CD4-positive, alpha-beta memory T cell (primary cell): ENCODE measurements at regions of chr6 and their contacts with region 1.

Region 1: DNA sequence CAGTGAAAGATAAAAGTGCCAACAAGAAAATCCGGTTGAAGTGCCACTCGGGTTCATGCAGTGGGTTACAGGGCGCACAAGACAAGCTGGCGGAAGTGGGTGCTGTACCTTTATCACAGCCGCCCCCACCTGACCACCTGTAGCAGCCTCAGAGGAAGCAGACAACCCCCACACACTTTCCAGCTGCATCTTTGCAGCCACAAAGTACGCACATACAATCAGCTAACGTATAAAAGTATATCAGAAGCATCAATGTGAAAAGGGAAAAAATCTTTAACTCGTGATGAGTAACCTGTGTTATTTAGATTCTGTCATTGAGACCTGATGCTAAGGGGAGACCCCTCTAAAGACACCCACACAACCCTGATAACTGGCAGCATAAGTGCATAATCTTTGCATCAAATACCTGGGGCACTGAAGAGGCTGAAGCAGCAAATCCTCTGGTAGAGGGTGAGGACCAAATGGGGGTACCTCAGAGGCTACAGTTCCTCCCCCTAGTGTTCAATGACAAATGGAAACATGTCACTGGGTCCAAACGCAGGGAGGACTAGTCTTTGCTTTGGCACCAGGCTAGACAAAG is 22.1 kb downstream of the BACH2 start:
- DNase-seq: peak; percentile 93 to 99 (median 97)
- H3K4me3 ChIP-seq: peak overlapping the region in 1 of 2 donors; percentile 21
- H3K4me3 Mint-ChIP-seq: peak overlapping the region; percentile 60 to 89 (median 79)
- H3K27ac ChIP-seq: peak overlapping the region; percentile 82
- H3K27ac Mint-ChIP-seq: peak overlapping the region; percentile 94 to 100 (median 99)
- H3K4me1 ChIP-seq: peaks cover 50% of the 10 kb centered on the region
- H3K4me1 Mint-ChIP-seq: peaks cover 51 to 80% (median 67%) of the 10 kb centered on the region in 4 donors
- H3K27me3 ChIP-seq: no peaks in the 10 kb centered on the region
- H3K27me3 Mint-ChIP-seq: no peaks in the 10 kb centered on the region

Region 2: GRCh38 chr6:90216072-90216977 is 58.2 kb before region 1 on chr6:
- CTCF ChIA-PET with region 1: interaction called, 3 read pairs
- POLR2A ChIA-PET with region 1: interaction called, 5 read pairs
- intact Hi-C with region 1: loop called (anchors 2 kb)
- DNase-seq: peak in 4 of 5 donors; percentile 11 to 73 (median 31)
- H3K4me3 ChIP-seq: no peak overlapping the region
- H3K4me3 Mint-ChIP-seq: peak overlapping the region in 5 of 8 donors; percentile 6 to 61 (median 35)
- H3K27ac ChIP-seq: peak overlapping the region; percentile 43
- H3K27ac Mint-ChIP-seq: peak overlapping the region in 3 of 7 donors; percentile 84 to 89 (median 86)
- H3K4me1 ChIP-seq: peaks cover 59% of the 10 kb centered on the region
- H3K4me1 Mint-ChIP-seq: peaks cover 27 to 30% (median 28%) of the 10 kb centered on the region in 4 donors
- H3K27me3 ChIP-seq: no peaks in the 10 kb centered on the region
- H3K27me3 Mint-ChIP-seq: no peaks in the 10 kb centered on the region

Region 3: GRCh38 chr6:90233994-90234393 is 40.5 kb before region 1 on chr6:
- CTCF ChIA-PET with region 1: interaction called, 3 read pairs
- POLR2A ChIA-PET with region 1: interaction called, 9 read pairs
- intact Hi-C with region 1: loop called (anchors 2 kb)
- DNase-seq: peak; percentile 79 to 89 (median 80)
- H3K4me3 ChIP-seq: no peak overlapping the region
- H3K4me3 Mint-ChIP-seq: peak overlapping the region; percentile 3 to 90 (median 74)
- H3K27ac ChIP-seq: peak overlapping the region; percentile 32
- H3K27ac Mint-ChIP-seq: peak overlapping the region; percentile 65 to 97 (median 92)
- H3K4me1 ChIP-seq: peaks cover 90% of the 10 kb centered on the region
- H3K4me1 Mint-ChIP-seq: peaks cover 63 to 97% (median 81%) of the 10 kb centered on the region in 4 donors
- H3K27me3 ChIP-seq: no peaks in the 10 kb centered on the region
- H3K27me3 Mint-ChIP-seq: no peaks in the 10 kb centered on the region

Region 4: GRCh38 chr6:90256698-90257485 is 17.6 kb before region 1 on chr6:
- CTCF ChIA-PET with region 1: interaction called, 3 read pairs
- POLR2A ChIA-PET with region 1: interaction called, 4 read pairs
- intact Hi-C with region 1: loop called (anchors 2 kb)
- DNase-seq: peak; percentile 50 to 76 (median 71)
- H3K4me3 ChIP-seq: no peak overlapping the region
- H3K4me3 Mint-ChIP-seq: peak overlapping the region in 6 of 8 donors; percentile 2 to 52 (median 13)
- H3K27ac ChIP-seq: peak overlapping the region; percentile 13
- H3K27ac Mint-ChIP-seq: peak overlapping the region; percentile 61 to 90 (median 82)
- H3K4me1 ChIP-seq: peaks cover 28% of the 10 kb centered on the region
- H3K4me1 Mint-ChIP-seq: peaks cover 29 to 77% (median 55%) of the 10 kb centered on the region in 4 donors
- H3K27me3 ChIP-seq: no peaks in the 10 kb centered on the region
- H3K27me3 Mint-ChIP-seq: no peaks in the 10 kb centered on the region

Region 5: GRCh38 chr6:90263633-90264032 is 10.9 kb before region 1 on chr6:
- CTCF ChIA-PET with region 1: interaction called, 7 read pairs
- POLR2A ChIA-PET with region 1: interaction called, 11 read pairs
- intact Hi-C with region 1: no loop called
- DNase-seq: no peak
- H3K4me3 ChIP-seq: no peak overlapping the region
- H3K4me3 Mint-ChIP-seq: peak overlapping the region in 1 of 8 donors; percentile 25
- H3K27ac ChIP-seq: no peak overlapping the region
- H3K27ac Mint-ChIP-seq: no peak overlapping the region
- H3K4me1 ChIP-seq: peaks cover 55% of the 10 kb centered on the region
- H3K4me1 Mint-ChIP-seq: peaks cover 34 to 88% (median 60%) of the 10 kb centered on the region in 4 donors
- H3K27me3 ChIP-seq: no peaks in the 10 kb centered on the region
- H3K27me3 Mint-ChIP-seq: no peaks in the 10 kb centered on the region

Region 6: DNA sequence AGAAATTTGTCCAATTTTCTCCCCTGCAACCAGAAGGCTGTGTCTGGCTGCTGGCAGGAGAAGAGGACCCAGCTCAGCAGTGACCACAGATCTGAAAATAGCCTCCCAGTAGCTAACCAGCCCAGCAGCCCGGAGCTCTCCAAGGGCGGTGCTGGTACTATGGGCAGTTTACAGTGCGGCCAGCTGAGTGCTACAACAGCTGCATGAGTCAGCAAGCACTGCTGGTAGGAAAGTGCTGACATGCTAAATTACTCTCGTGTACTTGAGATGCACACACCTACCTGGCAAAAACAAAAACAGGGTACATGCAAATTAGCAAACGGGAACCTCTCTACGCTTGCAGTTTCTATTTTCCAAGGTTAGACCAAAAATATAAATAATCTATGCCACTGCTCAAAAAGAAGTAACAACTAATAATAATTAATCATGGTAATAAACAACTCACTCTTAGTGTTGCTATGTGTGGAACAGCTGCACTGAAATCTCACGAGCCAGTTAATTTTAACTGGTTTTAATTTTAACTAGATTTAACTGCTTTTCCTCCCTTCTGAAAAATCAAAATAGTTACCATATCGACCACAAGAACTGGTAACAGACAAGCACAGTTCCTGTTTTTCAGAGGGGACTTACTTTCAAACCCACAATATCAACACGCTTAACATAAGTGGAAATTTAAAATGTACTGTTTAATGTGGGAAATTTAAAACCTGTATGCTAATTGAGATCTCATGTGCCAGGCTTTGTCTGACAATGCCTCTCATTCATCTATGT is 11.3 kb after region 1 on chr6:
- CTCF ChIA-PET with region 1: interaction called, 16 read pairs
- POLR2A ChIA-PET with region 1: interaction called, 85 read pairs
- intact Hi-C with region 1: loop called (anchors 1 kb)
- DNase-seq: peak; percentile 68 to 83 (median 76)
- H3K4me3 ChIP-seq: peak overlapping the region; percentile 1 to 58
- H3K4me3 Mint-ChIP-seq: peak overlapping the region; percentile 80 to 95 (median 86)
- H3K27ac ChIP-seq: peak overlapping the region; percentile 46
- H3K27ac Mint-ChIP-seq: peak overlapping the region; percentile 77 to 98 (median 89)
- H3K4me1 ChIP-seq: peaks cover 32% of the 10 kb centered on the region
- H3K4me1 Mint-ChIP-seq: peaks cover 47 to 89% (median 68%) of the 10 kb centered on the region in 4 donors
- H3K27me3 ChIP-seq: no peaks in the 10 kb centered on the region
- H3K27me3 Mint-ChIP-seq: peaks cover 0 to 2% of the 10 kb centered on the region in 2 donors

Region 7: DNA sequence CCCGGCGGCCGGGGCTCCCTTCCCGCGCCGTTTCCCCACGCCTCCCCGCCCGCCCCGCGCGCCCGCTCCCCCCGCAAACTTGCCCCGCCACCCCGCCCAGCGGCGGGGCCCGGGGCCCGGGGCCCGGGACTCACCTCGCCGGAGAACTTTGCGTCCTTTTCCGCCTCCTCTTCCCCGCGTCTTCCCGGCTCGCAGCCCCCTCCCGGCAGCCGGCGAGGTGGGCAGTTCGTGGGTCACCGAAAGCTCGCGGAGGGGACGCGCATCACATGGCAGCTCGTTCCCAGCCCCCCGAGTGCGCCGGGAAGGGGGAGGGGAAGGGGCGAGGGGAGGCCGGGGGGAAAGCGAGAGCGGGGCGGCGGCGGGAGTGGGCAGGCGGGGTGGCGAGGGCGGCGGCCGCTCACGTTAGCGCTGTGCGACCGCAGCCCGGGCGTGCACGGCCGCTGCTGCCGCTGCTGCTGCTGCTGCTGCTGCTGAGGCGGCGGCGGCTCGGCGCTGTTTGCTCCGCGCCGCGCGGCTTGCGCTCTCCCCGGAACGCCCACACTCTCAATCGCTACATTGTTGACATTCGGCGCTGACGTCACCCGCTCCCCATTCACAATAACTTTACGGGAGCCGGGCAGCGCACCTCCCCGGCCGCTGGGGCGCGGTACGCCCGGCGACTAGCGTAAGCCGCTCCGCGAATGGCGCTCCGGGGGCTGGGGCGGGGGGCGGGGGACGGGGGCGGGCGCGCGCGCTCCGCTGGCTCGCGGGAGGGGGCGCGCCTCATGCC is 22.0 kb after region 1 on chr6 and contains the start of gene BACH2:
- CTCF ChIA-PET with region 1: interaction called, 6 read pairs
- POLR2A ChIA-PET with region 1: interaction called, 40 read pairs
- intact Hi-C with region 1: loop called (anchors 1 kb)
- DNase-seq: peak; percentile 90 to 96 (median 92)
- H3K4me3 ChIP-seq: peak within 1 kb of the TSS; percentile 43 to 81
- H3K4me3 Mint-ChIP-seq: peak within 1 kb of the TSS; percentile 90 to 96 (median 93)
- H3K27ac ChIP-seq: peak within 1 kb of the TSS; percentile 65
- H3K27ac Mint-ChIP-seq: peak within 1 kb of the TSS; percentile 92 to 99 (median 97)
- H3K4me1 ChIP-seq: peaks cover 40% of the 10 kb centered on the region
- H3K4me1 Mint-ChIP-seq: peaks cover 14 to 40% (median 24%) of the 10 kb centered on the region in 4 donors
- H3K27me3 ChIP-seq: no peaks in the 10 kb centered on the region
- H3K27me3 Mint-ChIP-seq: peaks cover 0 to 4% of the 10 kb centered on the region in 2 donors
- total RNA-seq, gene BACH2: 44.4 to 48.0 TPM